Mammary epithelial cell (primary cell): ENCODE measurements at regions of chr3 and their contacts with region 1.

Region 1: GRCh38 chr3:46478341-46478740 is 13.6 kb upstream of the LTF start:
- DNase-seq: no peak
- H3K4me3 ChIP-seq: no peak overlapping the region
- H3K27ac ChIP-seq: no peak overlapping the region
- H3K4me1 ChIP-seq: peaks cover 5% of the 10 kb centered on the region
- H3K27me3 ChIP-seq: peaks cover 4% of the 10 kb centered on the region
- CTCF ChIP-seq: no peak

Region 2: DNA sequence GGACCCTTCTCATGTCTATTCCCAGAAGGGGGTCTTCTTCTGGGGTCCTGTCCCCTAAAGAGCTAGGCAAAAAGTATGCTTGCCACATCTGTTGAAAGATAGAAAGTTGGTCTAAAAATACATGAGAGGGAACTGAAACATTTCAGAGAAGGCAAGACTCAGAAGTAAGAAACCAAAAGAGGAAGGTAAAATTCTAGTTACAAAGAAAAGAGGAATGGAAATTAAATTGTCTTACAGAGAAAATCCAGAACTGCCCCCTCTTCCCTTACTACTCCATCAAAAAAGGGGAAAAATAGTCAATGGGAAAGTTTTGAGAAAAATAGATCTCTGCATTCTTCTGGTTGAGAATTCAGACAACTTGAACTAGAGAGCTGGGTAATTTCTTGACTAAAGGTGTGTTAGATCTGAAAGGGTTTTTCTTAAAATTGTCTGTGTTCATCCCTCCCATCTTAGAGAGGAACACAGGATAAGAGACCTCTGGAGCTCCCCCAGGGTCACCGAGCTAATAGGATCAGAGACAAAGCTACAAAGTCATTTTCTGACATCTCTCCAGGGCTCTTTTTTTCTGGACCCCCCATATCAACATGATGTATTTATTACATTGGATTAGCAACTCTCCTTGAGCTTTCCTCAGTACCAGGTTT is 156.8 kb before region 1 on chr3:
- CTCF ChIA-PET with region 1: no interaction called
- dilution Hi-C with region 1: no loop called
- in situ Hi-C with region 1: no loop called
- intact Hi-C with region 1: no loop called
- DNase-seq: no peak
- H3K4me3 ChIP-seq: no peak overlapping the region
- H3K27ac ChIP-seq: no peak overlapping the region
- H3K4me1 ChIP-seq: peaks cover 5% of the 10 kb centered on the region
- H3K27me3 ChIP-seq: peaks cover 2% of the 10 kb centered on the region
- CTCF ChIP-seq: no peak

Region 3: DNA sequence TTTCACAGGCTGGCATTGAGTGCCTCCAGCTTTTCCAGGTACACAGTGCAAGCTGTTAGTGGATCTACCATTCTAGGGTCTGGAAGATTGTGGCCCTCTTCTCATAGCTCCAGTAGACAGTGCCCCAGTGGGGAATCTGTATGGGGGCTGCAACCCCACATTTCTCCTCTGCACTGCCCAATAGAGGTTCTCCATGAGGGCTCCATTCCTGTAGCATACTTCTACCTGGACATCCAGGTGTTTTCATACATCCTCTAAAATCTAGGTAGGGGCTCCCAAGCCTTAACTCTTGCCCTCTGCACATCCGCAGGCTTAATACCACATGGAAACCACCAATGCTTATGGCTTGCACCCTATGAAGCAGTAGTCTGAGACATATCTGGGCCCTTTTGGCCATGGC is 139.5 kb before region 1 on chr3:
- CTCF ChIA-PET with region 1: no interaction called
- dilution Hi-C with region 1: no loop called
- in situ Hi-C with region 1: no loop called
- intact Hi-C with region 1: no loop called
- DNase-seq: no peak
- H3K4me3 ChIP-seq: no peak overlapping the region
- H3K27ac ChIP-seq: no peak overlapping the region
- H3K4me1 ChIP-seq: peaks cover 21% of the 10 kb centered on the region
- H3K27me3 ChIP-seq: no peaks in the 10 kb centered on the region
- CTCF ChIP-seq: no peak

Region 4: GRCh38 chr3:46406788-46407611 is 71.3 kb before region 1 on chr3 and contains the starts of genes CCR5AS and CCRL2:
- CTCF ChIA-PET with region 1: no interaction called
- dilution Hi-C with region 1: loop called (anchors 5 kb)
- in situ Hi-C with region 1: no loop called
- intact Hi-C with region 1: no loop called
- DNase-seq: no peak
- H3K4me3 ChIP-seq: no peak within 1 kb of the TSS
- H3K27ac ChIP-seq: no peak within 1 kb of the TSS
- H3K4me1 ChIP-seq: no peaks in the 10 kb centered on the region
- H3K27me3 ChIP-seq: no peaks in the 10 kb centered on the region
- CTCF ChIP-seq: no peak
- total RNA-seq, gene CCRL2: not detected

Region 5: DNA sequence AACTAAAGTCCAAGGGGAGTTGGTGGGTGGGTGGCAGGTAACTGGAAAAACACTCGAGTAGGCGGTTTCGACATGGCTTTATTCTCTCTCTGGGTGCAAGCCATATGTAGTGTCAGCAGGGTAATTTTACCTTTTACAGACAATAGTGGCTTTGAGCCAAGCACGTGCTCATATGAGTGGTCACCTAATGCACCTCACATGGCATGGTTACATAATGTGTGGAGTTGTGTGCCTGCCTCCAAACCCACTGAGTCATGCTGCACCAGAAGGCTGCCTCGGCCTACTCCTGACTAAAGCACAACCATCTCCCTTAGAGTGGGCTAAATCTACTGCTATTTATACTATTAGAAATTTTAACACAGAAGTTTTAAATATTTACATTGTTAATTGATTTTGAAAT is 54.8 kb before region 1 on chr3:
- CTCF ChIA-PET with region 1: no interaction called
- dilution Hi-C with region 1: no loop called
- in situ Hi-C with region 1: no loop called
- intact Hi-C with region 1: no loop called
- DNase-seq: peak; percentile 91
- H3K4me3 ChIP-seq: no peak overlapping the region
- H3K27ac ChIP-seq: peak overlapping the region; percentile 23
- H3K4me1 ChIP-seq: peaks cover 42% of the 10 kb centered on the region
- H3K27me3 ChIP-seq: no peaks in the 10 kb centered on the region
- CTCF ChIP-seq: no peak